Activated CD4-positive, alpha-beta memory T cell treated with anti-CD3 and anti-CD28 coated beads, Interleukin-2, amount 10 ng/mL, durations not matched to agents 7 days and 5 days (primary cell): ENCODE measurements at regions of chr12 and their contacts with region 1.

Region 1: GRCh38 chr12:12916135-12916944 is 25.0 kb downstream of the GPRC5A start:
- DNase-seq: peak; percentile 89
- H3K4me3 Mint-ChIP-seq: no peak overlapping the region
- H3K27ac Mint-ChIP-seq: no peak overlapping the region
- H3K4me1 Mint-ChIP-seq: peaks cover 10% of the 10 kb centered on the region
- H3K27me3 Mint-ChIP-seq: peaks cover 18% of the 10 kb centered on the region

Region 2: GRCh38 chr12:12975322-12976077 is 59.2 kb after region 1 on chr12:
- CTCF ChIA-PET with region 1: interaction called, 13 read pairs
- POLR2A ChIA-PET with region 1: no interaction called
- DNase-seq: no peak
- H3K4me3 Mint-ChIP-seq: no peak overlapping the region
- H3K27ac Mint-ChIP-seq: no peak overlapping the region
- H3K4me1 Mint-ChIP-seq: no peaks in the 10 kb centered on the region
- H3K27me3 Mint-ChIP-seq: no peaks in the 10 kb centered on the region

Region 3: DNA sequence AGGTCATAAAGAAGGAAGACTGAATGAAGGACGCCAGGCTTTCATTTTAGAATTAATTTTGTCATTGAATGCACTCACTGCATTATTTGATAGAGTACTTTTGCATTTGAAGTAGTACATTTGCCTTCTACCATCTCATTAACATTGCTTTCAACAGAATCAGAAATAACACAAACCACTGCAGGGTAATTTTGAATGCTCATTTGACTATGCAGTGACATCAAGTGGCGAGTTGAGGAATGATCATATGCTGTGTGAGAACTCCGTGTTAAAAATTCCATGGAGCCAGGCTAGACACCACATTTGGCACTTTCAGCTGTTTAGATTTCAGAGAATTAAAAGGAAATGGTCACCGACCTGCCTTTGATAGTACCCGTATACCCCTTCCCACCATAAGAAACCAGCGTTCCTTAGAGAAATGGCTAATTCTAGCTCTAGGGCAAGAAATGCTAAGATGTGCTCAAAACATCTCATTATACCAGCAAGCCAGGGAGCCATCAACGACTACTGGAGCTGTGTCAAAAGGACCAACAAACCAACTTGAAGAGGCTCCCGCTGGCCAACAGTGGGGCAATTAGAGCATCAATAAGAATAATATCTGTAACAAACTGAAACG is 67.2 kb after region 1 on chr12:
- CTCF ChIA-PET with region 1: interaction called, 17 read pairs
- POLR2A ChIA-PET with region 1: no interaction called
- DNase-seq: no peak
- H3K4me3 Mint-ChIP-seq: no peak overlapping the region
- H3K27ac Mint-ChIP-seq: no peak overlapping the region
- H3K4me1 Mint-ChIP-seq: no peaks in the 10 kb centered on the region
- H3K27me3 Mint-ChIP-seq: no peaks in the 10 kb centered on the region

Region 4: DNA sequence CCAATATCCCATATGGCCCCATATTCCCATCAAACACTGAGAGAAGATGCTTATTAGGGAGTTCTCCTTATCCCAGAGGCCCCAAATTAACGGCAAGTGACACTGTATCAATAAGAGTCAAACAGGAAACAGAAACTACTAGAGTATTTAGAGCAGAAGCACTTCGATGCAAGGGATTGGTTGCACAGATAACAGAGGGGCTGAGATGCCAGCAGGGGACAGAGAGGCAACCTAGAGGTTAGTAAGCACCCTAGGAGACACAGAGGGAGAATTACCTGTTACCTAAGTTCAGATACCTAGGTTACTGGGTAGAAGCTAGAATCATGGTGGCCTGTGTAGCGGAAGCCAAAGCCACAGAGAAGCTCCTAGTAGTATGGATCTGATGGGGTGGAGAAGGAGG is 80.8 kb after region 1 on chr12:
- CTCF ChIA-PET with region 1: no interaction called
- POLR2A ChIA-PET with region 1: no interaction called
- DNase-seq: no peak
- H3K4me3 Mint-ChIP-seq: no peak overlapping the region
- H3K27ac Mint-ChIP-seq: no peak overlapping the region
- H3K4me1 Mint-ChIP-seq: peaks cover 34% of the 10 kb centered on the region
- H3K27me3 Mint-ChIP-seq: peaks cover 8% of the 10 kb centered on the region

Region 5: GRCh38 chr12:13233830-13234641 is 317.7 kb after region 1 on chr12:
- CTCF ChIA-PET with region 1: interaction called, 12 read pairs
- POLR2A ChIA-PET with region 1: no interaction called
- DNase-seq: peak; percentile 35
- H3K4me3 Mint-ChIP-seq: no peak overlapping the region
- H3K27ac Mint-ChIP-seq: no peak overlapping the region
- H3K4me1 Mint-ChIP-seq: peaks cover under 1% of the 10 kb centered on the region
- H3K27me3 Mint-ChIP-seq: peaks cover 17% of the 10 kb centered on the region

Region 6: DNA sequence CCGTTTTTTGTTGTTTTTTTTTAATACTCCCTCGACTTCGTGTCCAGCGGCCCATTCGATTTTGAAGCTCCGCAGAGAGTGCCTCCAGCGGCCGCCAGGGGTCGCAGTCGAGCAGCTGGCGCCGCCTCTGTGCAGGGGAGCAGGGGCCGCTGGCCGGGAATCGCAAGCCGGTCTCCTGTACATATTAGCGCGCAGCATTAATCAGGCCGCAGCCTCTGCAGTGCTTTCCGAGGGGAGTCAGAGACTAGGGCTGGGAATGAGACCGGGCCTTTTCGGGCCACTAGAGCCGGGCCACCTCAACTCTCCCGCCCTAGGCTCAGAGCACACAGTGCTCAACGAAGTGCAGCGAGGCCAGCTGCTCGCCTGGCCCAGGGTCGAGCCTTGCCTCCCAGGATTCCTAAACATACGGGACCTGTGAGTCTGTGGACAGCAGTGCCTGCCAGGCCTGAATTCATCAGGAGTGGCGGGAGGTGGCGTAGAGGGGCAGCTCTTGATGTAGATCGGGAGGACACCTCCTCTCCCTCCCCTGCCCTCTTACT is 362.0 kb after region 1 on chr12:
- CTCF ChIA-PET with region 1: no interaction called
- POLR2A ChIA-PET with region 1: no interaction called
- DNase-seq: peak; percentile 54
- H3K4me3 Mint-ChIP-seq: no peak overlapping the region
- H3K27ac Mint-ChIP-seq: no peak overlapping the region
- H3K4me1 Mint-ChIP-seq: peaks cover 4% of the 10 kb centered on the region
- H3K27me3 Mint-ChIP-seq: peaks cover 35% of the 10 kb centered on the region